HCT116 (cell line): ENCODE measurements at regions of chr18 and their contacts with region 1.

Region 1: DNA sequence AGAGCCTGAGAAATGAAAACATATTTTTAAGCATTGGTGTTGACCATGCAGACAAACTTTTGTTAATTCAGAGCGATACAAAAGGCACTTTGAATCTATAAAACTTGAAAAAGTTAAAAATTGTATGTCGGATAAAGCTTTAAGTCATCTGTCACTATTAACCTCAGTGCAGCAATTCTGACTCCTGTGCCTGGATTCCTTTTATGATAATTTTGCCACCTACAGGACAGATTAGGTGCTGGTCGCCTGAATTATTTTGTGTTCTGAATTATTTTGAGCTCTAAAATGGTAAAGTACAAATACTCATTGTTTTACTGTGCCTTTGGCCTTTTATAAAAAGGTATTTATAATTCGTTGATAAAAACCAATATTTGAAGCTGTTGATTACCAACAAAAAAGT is 19.4 kb upstream of the RNF138 start:
- DNase-seq: no peak
- ATAC-seq: no peak
- H3K4me3 ChIP-seq: no peak overlapping the region
- H3K27ac ChIP-seq: no peak overlapping the region
- H3K4me1 ChIP-seq: no peaks in the 10 kb centered on the region
- H3K27me3 ChIP-seq: no peaks in the 10 kb centered on the region
- CTCF ChIP-seq: peak; percentile 27 to 57 (median 40); a peak in 3 of 6 replicates
- POLR2A ChIP-seq: no peak
- RAD21 ChIP-seq: peak; percentile 56

Region 2: DNA sequence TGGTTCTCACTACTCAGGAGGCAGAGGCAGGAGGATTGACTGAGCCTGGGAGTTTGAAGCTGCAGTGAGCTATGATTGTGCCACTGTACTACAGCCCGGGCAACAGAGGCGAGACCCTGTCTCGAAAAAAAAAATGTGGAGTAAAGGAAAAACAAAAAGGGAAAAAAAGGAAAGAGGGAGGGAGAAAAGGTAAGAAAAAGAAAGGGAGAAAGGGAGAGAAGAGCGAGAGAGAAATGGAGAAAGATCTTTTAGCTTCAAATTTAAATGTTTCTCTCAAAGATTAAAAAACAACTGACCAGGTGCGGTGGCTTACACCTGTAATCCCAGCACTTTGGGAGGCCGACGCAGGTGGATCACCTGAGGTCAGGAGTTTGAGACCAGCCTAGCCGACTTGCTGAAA is 11.5 kb after region 1 on chr18:
- CTCF ChIA-PET with region 1: interaction called, 17 read pairs
- POLR2A ChIA-PET with region 1: no interaction called
- RAD21 ChIA-PET with region 1: no interaction called
- intact Hi-C with region 1: no loop called
- DNase-seq: no peak
- ATAC-seq: no peak
- H3K4me3 ChIP-seq: no peak overlapping the region
- H3K27ac ChIP-seq: no peak overlapping the region
- H3K4me1 ChIP-seq: peaks cover 10 to 47% of the 10 kb centered on the region in 2 experiments
- H3K27me3 ChIP-seq: no peaks in the 10 kb centered on the region
- CTCF ChIP-seq: no peak
- POLR2A ChIP-seq: no peak
- RAD21 ChIP-seq: no peak

Region 3: DNA sequence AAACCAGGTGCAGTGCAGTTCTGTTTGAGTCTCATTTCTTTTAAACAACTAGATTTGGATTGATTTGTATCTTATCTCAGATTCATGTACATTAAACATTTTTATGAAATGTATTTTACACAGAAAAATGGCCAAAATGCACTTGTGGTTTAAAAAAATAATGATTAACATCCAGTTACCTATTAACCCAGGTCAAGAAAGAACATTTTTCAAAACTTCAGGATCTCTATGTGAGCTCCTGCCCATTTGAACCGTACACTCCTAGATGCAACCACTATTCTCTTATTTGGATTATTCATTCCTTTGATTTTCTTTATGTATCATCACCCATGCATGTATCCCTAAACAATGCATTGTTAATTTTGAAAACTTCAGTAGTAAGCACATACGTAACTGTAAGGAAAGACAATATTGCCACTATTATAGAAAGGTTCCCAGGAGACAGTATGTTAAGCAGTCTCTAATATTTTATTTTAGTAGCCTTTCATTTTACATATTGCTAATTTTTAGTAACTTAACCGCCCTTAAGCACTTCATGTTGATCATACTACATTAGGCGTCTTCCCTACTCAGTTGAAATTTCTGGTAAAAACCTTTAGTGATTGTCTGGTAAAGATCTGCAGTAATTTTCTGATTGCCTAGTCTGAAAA is 42.1 kb after region 1 on chr18:
- CTCF ChIA-PET with region 1: no interaction called
- POLR2A ChIA-PET with region 1: no interaction called
- RAD21 ChIA-PET with region 1: no interaction called
- intact Hi-C with region 1: no loop called
- DNase-seq: no peak
- ATAC-seq: no peak
- H3K4me3 ChIP-seq: no peak overlapping the region
- H3K27ac ChIP-seq: no peak overlapping the region
- H3K4me1 ChIP-seq: no peaks in the 10 kb centered on the region
- H3K27me3 ChIP-seq: no peaks in the 10 kb centered on the region
- CTCF ChIP-seq: no peak
- POLR2A ChIP-seq: no peak
- RAD21 ChIP-seq: no peak